WTC11 (cell line): ENCODE measurements at regions of chr3 and their contacts with region 1.

Region 1: DNA sequence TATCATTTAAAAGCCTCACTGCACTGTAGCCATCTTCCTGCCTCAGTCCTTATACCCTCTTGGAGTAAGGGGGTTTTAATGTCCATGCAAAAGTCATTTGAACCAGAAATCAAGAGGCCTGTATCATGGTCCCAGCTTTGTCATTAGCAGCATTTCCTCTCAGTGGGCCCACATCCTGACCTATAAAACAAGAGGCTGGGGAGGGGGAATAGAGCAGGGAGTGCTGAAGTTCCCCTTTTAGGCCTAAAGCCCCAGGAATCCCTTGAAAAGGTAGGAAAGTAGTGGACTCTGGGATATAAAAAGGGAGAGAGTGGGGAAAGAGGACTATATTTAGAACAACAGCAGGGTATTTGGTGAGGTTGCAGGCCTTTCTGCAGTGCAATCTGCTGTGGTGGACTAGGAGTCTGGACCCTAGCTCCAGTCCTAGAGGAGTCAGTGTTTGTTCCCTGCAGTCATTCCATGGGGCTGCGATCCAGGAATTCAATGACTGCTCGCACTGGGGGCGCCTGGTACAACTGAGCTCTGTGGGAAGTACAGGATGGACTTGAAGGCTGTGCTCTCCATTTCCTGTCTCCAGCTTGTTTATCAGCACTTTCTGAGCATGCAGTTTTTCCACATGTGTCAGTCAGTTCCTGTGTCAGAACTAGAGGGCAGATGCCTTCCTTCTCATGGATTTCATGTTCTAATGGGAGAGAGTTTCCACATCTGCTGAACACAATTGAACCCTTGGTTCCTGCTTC is 46.8 kb downstream of the PDHB start:
- DNase-seq: no peak
- ATAC-seq: peak; percentile 75
- H3K4me3 Mint-ChIP-seq: no peak overlapping the region
- H3K27ac Mint-ChIP-seq: peak overlapping the region; percentile 1; the same call in 1 of the 2 replicates
- H3K4me1 Mint-ChIP-seq: peaks cover 34% of the 10 kb centered on the region
- H3K27me3 Mint-ChIP-seq: no peaks in the 10 kb centered on the region
- CTCF ChIP-seq: no peak

Region 2: GRCh38 chr3:57927916-57928315 is 458.9 kb before region 1 on chr3:
- CTCF ChIA-PET with region 1: no interaction called
- POLR2A ChIA-PET with region 1: no interaction called
- DNase-seq: no peak
- ATAC-seq: no peak
- H3K4me3 Mint-ChIP-seq: no peak overlapping the region
- H3K27ac Mint-ChIP-seq: no peak overlapping the region
- H3K4me1 Mint-ChIP-seq: no peaks in the 10 kb centered on the region
- H3K27me3 Mint-ChIP-seq: no peaks in the 10 kb centered on the region
- CTCF ChIP-seq: no peak

Region 3: GRCh38 chr3:58597770-58598310 is 211.0 kb after region 1 on chr3:
- CTCF ChIA-PET with region 1: no interaction called
- POLR2A ChIA-PET with region 1: interaction called, 10 read pairs
- DNase-seq: no peak
- ATAC-seq: no peak
- H3K4me3 Mint-ChIP-seq: no peak overlapping the region
- H3K27ac Mint-ChIP-seq: no peak overlapping the region
- H3K4me1 Mint-ChIP-seq: peaks cover 3% of the 10 kb centered on the region; the same call in 1 of the 2 replicates
- H3K27me3 Mint-ChIP-seq: no peaks in the 10 kb centered on the region
- CTCF ChIP-seq: no peak